ENCODE measurements at regions of chr22 and their contacts with region 1.

Region 1: GRCh38 chr22:24325105-24325757 is 54.6 kb downstream of the SPECC1L start:
- DNase-seq: no peak
- H3K4me3 ChIP-seq: no peak overlapping the region
- H3K27ac ChIP-seq: no peak overlapping the region
- H3K4me1 ChIP-seq: peaks cover 49% of the 10 kb centered on the region
- H3K27me3 ChIP-seq: no peaks in the 10 kb centered on the region
- CTCF ChIP-seq: peak; percentile 85

Region 2: DNA sequence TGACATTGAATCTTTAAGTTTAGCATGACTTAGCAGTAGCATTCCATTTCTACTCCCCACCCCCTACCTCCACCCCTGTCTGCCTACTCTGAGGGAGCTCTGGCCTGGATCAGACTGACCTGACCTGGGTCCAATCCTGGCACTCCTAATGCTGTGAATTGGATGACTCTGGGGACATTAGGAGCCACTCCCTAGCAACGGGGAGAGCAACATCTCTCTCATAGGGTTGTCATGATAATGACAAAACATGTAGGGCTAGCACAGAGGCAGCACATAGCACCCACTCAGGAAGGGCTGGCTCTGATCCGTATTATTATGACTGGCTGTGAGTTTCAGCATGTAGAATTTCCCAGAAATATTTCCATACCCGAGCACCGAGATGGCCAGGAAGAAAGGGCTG is 273.7 kb before region 1 on chr22:
- intact Hi-C with region 1: no loop called
- DNase-seq: no peak
- H3K4me3 ChIP-seq: no peak overlapping the region
- H3K27ac ChIP-seq: peak overlapping the region; percentile 41
- H3K4me1 ChIP-seq: peaks cover 35% of the 10 kb centered on the region
- H3K27me3 ChIP-seq: no peaks in the 10 kb centered on the region
- CTCF ChIP-seq: no peak

Region 3: DNA sequence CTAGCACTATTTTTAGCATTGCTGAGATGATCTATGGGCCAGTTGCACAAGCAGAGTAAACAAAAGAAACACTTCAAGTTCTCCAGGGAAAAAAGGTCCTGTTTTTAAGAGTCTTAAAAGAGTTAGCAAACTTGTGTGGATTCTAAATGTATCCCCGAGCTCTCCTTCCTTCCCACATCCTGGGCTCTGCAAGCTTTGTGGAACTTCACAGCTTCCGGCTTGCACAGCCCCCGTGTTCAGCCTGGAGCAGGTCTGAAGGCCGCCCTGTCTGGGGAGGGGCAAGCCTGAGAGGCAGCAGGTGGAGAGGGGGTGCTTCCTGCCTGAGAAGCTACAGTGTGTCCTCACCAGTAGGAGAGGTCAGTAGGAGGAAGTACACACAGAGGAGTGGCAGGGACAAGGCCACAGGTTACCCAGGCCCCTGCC is 179.0 kb before region 1 on chr22:
- intact Hi-C with region 1: no loop called
- DNase-seq: no peak
- H3K4me3 ChIP-seq: no peak overlapping the region
- H3K27ac ChIP-seq: peak overlapping the region; percentile 91
- H3K4me1 ChIP-seq: peaks cover 92% of the 10 kb centered on the region
- H3K27me3 ChIP-seq: no peaks in the 10 kb centered on the region
- CTCF ChIP-seq: no peak

Region 4: DNA sequence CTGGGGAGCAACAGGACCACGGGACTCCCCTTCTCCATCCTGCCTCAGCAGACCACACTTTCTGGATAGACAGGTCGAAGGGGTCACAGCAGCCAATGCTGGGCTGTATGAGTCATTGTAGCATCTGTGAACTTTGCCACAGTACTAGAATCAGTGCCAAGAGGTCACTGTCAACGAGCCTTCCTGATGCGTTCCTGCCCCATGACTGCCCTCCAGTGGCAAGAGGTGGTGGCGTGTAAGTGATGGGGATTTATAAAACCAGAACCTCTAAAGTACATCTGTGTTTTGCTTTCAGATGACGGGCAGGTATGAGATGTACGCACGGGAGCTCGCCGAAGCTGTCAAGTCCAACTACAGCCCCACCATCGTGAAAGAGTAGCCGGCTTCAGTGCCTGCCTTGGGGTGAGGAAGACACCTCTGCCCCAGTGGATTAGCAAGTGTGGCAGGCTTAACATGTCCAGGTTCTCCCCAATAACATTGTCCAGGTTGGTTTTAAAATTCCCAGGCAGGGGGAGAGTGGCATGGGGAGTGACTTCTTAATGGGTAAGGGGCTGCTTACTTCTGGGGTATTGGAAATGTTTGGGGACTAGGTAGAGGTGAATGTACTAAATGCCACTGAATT is 200.3 kb after region 1 on chr22:
- intact Hi-C with region 1: loop called (anchors 10 kb)
- DNase-seq: peak; percentile 77
- H3K4me3 ChIP-seq: no peak overlapping the region
- H3K27ac ChIP-seq: peak overlapping the region; percentile 33
- H3K4me1 ChIP-seq: peaks cover 14% of the 10 kb centered on the region
- H3K27me3 ChIP-seq: no peaks in the 10 kb centered on the region
- CTCF ChIP-seq: peak; percentile 86

Measured in left ventricle myocardium inferior (tissue), 1 donor.